ENCODE measurements at regions of chr5 and their contacts with region 1.

Region 1: GRCh38 chr5:175478384-175479124 is at the start of gene SFXN1:
- DNase-seq: peak; percentile 84
- H3K4me3 Mint-ChIP-seq: peak within 1 kb of the TSS; percentile 96
- H3K27ac Mint-ChIP-seq: peak within 1 kb of the TSS; percentile 84
- H3K4me1 Mint-ChIP-seq: peaks cover 62% of the 10 kb centered on the region
- H3K27me3 Mint-ChIP-seq: peaks cover 12% of the 10 kb centered on the region
- total RNA-seq, gene SFXN1: 394 and 397 TPM in 2 replicates

Region 2: DNA sequence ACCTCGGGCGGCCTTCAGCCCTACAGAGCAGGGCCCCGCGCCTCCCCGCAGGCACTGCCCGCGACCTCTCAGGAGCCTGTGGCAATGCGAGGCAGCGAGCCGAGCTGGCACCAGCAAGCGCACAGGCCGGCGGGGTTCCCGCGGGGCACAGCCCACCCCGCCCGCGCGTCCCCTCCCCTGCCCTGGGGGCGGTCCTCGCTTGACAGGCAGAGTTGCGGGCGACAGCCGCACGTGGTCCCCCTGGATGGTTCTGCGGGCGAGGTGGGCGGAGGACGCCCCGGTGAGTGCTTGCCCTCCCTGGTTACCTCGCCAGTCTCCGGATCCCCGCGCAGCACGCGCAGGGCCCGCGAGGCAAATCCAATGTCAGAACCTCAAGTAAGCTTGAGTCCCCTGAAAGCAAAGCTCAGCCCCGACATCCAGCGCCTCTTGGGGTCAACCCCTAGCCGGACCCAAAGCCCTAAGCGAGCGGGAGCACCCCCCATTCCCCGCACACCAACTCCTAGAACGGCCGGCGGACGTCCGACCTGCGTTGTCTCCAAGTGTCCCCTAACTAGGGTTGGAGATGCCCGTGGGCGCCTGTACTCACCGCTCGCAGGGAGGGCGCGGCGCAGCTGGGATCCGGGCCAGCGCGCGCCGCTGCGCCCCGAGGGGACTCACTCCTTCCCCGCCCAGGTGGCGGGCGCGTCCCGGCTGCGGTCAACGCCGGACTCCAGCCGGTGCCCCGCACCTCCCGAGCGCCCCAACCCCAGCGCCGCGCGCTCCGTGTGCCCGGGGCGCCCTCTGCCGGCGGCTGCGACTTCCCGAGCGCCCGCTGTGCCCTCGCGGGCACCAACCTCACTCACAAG is 34.3 kb before region 1 on chr5 and contains the start of gene DRD1:
- intact Hi-C with region 1: loop called (anchors 1 kb)
- DNase-seq: peak; percentile 28
- H3K4me3 Mint-ChIP-seq: peak within 1 kb of the TSS; percentile 71
- H3K27ac Mint-ChIP-seq: no peak within 1 kb of the TSS
- H3K4me1 Mint-ChIP-seq: peaks cover 5% of the 10 kb centered on the region
- H3K27me3 Mint-ChIP-seq: peaks cover 75% of the 10 kb centered on the region
- total RNA-seq, gene DRD1: not detected in 2 replicates

Region 3: GRCh38 chr5:175464074-175464941 is 14.2 kb before region 1 on chr5:
- intact Hi-C with region 1: loop called (anchors 1 kb)
- DNase-seq: peak; percentile 57
- H3K4me3 Mint-ChIP-seq: no peak overlapping the region
- H3K27ac Mint-ChIP-seq: no peak overlapping the region
- H3K4me1 Mint-ChIP-seq: peaks cover 20% of the 10 kb centered on the region
- H3K27me3 Mint-ChIP-seq: peaks cover 8% of the 10 kb centered on the region

Region 4: DNA sequence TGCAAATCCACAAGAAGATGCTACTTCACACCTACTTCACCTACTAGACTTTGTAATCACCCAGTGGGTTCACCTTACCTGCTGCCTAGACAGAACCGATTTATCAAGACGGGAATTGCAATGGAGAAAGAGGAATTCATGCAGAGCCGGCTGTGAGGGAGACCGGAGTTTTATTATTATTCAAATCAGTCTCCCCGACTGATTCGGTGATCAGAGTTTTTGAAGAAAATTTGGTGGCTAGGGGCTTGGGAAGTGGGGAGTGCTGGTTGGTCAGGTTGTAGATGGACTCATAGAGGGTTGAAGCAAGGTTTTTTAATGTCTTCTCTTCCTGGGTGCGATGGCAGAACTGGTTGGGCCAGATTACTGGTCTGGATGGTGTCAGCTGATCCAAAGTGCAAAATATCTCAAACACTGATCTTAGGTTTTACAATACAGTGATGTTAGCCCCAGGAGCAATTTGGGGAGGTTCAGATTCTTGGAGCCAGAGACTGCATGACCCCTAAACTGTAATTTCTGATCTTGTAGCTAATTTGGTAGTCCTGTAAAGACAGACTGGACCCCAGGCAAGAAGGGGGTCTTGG is 23.3 kb after region 1 on chr5:
- intact Hi-C with region 1: loop called (anchors 2 kb)
- DNase-seq: no peak
- H3K4me3 Mint-ChIP-seq: no peak overlapping the region
- H3K27ac Mint-ChIP-seq: peak overlapping the region; percentile 27
- H3K4me1 Mint-ChIP-seq: peaks cover 51% of the 10 kb centered on the region
- H3K27me3 Mint-ChIP-seq: no peaks in the 10 kb centered on the region

Region 5: GRCh38 chr5:175681045-175681967 is 202.8 kb after region 1 on chr5:
- intact Hi-C with region 1: no loop called
- DNase-seq: no peak
- H3K4me3 Mint-ChIP-seq: no peak overlapping the region
- H3K27ac Mint-ChIP-seq: no peak overlapping the region
- H3K4me1 Mint-ChIP-seq: peaks cover 57% of the 10 kb centered on the region
- H3K27me3 Mint-ChIP-seq: no peaks in the 10 kb centered on the region

Region 6: DNA sequence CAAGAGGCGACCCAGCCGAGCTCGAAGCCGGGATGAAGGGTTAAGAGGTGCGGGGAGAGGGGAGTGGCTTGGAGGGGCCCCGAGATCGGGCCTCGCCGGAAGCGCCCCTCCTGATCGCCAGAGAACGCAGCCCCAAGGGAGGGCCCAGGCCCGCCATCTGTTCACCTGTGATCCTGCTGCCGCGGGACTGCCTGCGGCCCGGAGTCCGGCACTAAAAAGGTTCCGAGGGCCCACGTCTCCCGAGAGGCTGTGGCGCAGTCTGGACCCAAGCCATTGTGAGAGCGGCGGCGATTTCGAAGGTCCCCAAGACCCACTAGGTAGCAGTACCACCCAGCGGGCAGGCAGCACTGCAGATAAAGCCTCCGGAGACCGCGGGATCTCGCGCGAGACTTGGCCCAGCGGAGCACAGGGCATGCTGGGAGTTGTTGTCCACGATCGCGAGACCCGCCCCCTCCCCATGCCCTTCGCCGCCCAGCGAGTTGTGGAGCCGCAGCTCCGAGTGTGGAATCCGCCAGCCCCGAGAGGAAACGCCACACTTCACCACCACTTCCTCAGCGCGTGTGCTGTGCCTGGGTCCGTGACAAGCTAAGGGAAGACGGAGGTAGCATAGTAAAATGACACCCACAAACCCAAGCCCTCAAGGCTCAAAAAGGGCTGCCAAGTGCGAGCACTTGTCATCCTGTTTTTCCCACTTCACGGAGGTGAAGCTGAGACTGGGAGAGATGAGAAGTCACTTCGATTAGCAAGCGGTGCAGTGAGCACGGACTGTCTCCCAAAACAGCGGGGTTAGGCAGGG is 883.1 kb after region 1 on chr5 and contains the start of gene KIAA1191:
- intact Hi-C with region 1: loop called (anchors 10 kb)
- DNase-seq: peak; percentile 93
- H3K4me3 Mint-ChIP-seq: peak within 1 kb of the TSS; percentile 97
- H3K27ac Mint-ChIP-seq: peak within 1 kb of the TSS; percentile 91
- H3K4me1 Mint-ChIP-seq: peaks cover 36% of the 10 kb centered on the region
- H3K27me3 Mint-ChIP-seq: no peaks in the 10 kb centered on the region
- total RNA-seq, gene KIAA1191: 60.9 and 63.4 TPM in 2 replicates